CD8-positive, alpha-beta T cell (primary cell): ENCODE measurements at regions of chr5 and their contacts with region 1.

Region 1: DNA sequence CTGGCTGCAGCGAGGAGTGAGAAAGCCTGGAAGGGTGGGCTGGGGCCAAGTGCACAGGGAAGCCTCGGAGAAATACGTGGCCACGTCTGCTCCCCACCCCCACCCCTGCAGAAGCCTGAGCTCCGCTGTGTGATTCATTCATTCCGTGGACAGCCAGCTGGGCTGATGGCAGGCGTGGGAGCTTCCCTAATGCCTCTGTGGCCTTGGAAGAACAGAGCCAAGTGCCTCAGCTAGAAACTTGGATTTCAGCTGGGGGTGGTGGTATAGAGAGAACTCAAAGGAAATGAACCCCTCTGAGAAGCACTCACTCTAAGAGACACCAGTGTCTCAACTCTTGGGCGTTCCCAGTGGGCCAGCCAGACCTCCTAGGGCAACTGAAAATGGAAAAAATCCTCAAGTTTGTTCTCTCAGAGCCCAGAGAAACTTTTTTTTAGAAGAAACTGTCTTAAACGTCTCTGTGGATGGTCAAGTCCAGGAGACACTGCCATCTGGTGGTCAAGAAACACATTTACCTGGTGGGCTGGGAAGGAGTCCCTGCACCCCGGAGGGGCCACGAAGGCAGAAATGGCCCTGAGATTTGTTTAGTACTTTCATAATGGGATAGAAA is 18.0 kb downstream of the ATOX1 start:
- DNase-seq: peak; percentile 10 to 74 (median 38)
- ATAC-seq: peak; percentile 71
- H3K4me3 ChIP-seq: no peak overlapping the region
- H3K4me3 Mint-ChIP-seq: no peak overlapping the region
- H3K27ac ChIP-seq: no peak overlapping the region
- H3K27ac Mint-ChIP-seq: no peak overlapping the region
- H3K4me1 ChIP-seq: peaks cover 14% of the 10 kb centered on the region
- H3K4me1 Mint-ChIP-seq: peaks cover 18% of the 10 kb centered on the region
- H3K27me3 ChIP-seq: no peaks in the 10 kb centered on the region
- H3K27me3 Mint-ChIP-seq: no peaks in the 10 kb centered on the region
- CTCF ChIP-seq: peak; percentile 79

Region 2: DNA sequence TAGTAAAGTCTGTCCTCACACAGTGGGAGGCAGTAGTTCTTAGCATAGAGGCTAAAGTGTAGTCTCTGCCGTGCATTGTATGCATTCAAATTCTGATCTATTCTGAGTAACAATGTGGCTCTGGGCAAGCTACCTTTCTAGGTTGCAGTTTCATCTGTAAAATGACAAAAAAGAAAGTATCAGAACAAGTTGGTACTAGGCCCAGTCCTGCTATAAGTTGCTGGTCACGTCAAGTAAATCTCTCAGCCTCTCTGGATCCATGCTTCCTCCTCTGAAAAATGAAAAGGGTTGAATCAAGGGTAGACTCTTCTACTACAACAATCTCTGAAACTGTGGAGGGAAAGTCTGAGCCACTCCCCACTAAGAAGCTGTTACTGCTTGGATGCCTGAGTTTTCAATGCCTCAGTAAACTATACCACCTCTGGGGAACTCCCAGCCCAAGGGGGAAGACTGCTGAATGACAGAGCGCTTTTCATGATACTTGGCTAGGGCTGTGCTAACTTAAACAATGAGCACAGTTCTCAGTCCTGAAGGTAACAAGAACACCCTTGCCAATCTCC is 19.3 kb before region 1 on chr5:
- CTCF ChIA-PET with region 1: interaction called, 10 read pairs
- POLR2A ChIA-PET with region 1: no interaction called
- intact Hi-C with region 1: no loop called
- DNase-seq: no peak
- ATAC-seq: no peak
- H3K4me3 ChIP-seq: no peak overlapping the region
- H3K4me3 Mint-ChIP-seq: no peak overlapping the region
- H3K27ac ChIP-seq: no peak overlapping the region
- H3K27ac Mint-ChIP-seq: no peak overlapping the region
- H3K4me1 ChIP-seq: no peaks in the 10 kb centered on the region
- H3K4me1 Mint-ChIP-seq: no peaks in the 10 kb centered on the region
- H3K27me3 ChIP-seq: no peaks in the 10 kb centered on the region
- H3K27me3 Mint-ChIP-seq: no peaks in the 10 kb centered on the region
- CTCF ChIP-seq: no peak

Region 3: GRCh38 chr5:151751091-151751490 is 10.7 kb after region 1 on chr5:
- CTCF ChIA-PET with region 1: interaction called, 49 read pairs
- POLR2A ChIA-PET with region 1: interaction called, 3 read pairs
- intact Hi-C with region 1: no loop called
- DNase-seq: no peak
- ATAC-seq: no peak
- H3K4me3 ChIP-seq: no peak overlapping the region
- H3K4me3 Mint-ChIP-seq: no peak overlapping the region
- H3K27ac ChIP-seq: no peak overlapping the region
- H3K27ac Mint-ChIP-seq: no peak overlapping the region
- H3K4me1 ChIP-seq: peaks cover 13% of the 10 kb centered on the region
- H3K4me1 Mint-ChIP-seq: peaks cover 35% of the 10 kb centered on the region
- H3K27me3 ChIP-seq: no peaks in the 10 kb centered on the region
- H3K27me3 Mint-ChIP-seq: no peaks in the 10 kb centered on the region
- CTCF ChIP-seq: no peak

Region 4: DNA sequence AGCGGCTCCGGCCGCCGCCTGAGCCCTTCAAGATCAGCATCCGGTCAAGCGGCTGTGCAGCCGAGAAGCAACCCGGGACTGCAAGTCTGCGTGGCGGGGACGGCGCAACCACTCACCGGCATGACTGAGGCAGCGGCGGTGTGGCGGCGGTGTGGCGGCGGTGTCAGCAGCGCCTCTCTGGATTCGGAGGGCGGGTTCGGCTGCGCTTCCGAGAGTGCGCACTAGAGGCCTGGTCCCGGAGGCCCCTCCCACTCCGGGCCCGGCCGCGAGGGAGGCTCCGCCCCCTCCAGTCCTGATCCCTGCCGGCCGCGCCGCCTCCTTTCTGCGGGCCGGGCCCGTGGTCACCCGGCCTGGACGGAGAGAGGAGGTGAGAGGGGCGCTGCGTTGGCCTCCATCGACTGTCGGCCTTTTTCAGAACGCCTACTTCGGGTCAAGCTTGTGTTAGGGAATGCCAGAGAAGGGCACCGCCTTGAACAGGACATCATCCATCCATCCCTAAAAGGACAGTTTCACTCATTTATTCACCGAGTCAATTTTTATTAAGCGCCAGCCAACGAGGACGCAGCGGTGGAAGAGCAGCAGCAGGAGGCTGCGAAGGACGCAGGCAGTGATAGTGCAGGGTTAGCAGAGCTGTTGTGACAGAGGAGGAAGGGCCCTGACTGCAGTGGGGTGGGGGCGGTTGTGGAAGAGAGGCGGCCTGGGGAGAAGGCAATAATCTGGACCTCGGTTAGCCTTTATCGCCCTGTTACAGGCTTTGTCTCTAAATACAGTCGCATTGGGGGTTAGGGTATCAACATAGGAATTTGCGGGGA is 18.2 kb after region 1 on chr5 and contains the start of gene ATOX1:
- CTCF ChIA-PET with region 1: interaction called, 49 read pairs
- POLR2A ChIA-PET with region 1: interaction called, 3 read pairs
- intact Hi-C with region 1: loop called in 1 of 2 experiments (anchors 2 kb)
- DNase-seq: peak; percentile 82 to 94 (median 90)
- ATAC-seq: peak; percentile 99
- H3K4me3 ChIP-seq: peak within 1 kb of the TSS; percentile 61 to 91
- H3K4me3 Mint-ChIP-seq: peak within 1 kb of the TSS; percentile 95
- H3K27ac ChIP-seq: peak within 1 kb of the TSS; percentile 60 to 70
- H3K27ac Mint-ChIP-seq: peak within 1 kb of the TSS; percentile 94
- H3K4me1 ChIP-seq: peaks cover 26% of the 10 kb centered on the region
- H3K4me1 Mint-ChIP-seq: peaks cover 35% of the 10 kb centered on the region
- H3K27me3 ChIP-seq: no peaks in the 10 kb centered on the region
- H3K27me3 Mint-ChIP-seq: no peaks in the 10 kb centered on the region
- CTCF ChIP-seq: no peak
- total RNA-seq, gene ATOX1: 12.6 to 13.2 TPM